PC-3 (cell line): ENCODE measurements at regions of chr11 and their contacts with region 1.

Region 1: DNA sequence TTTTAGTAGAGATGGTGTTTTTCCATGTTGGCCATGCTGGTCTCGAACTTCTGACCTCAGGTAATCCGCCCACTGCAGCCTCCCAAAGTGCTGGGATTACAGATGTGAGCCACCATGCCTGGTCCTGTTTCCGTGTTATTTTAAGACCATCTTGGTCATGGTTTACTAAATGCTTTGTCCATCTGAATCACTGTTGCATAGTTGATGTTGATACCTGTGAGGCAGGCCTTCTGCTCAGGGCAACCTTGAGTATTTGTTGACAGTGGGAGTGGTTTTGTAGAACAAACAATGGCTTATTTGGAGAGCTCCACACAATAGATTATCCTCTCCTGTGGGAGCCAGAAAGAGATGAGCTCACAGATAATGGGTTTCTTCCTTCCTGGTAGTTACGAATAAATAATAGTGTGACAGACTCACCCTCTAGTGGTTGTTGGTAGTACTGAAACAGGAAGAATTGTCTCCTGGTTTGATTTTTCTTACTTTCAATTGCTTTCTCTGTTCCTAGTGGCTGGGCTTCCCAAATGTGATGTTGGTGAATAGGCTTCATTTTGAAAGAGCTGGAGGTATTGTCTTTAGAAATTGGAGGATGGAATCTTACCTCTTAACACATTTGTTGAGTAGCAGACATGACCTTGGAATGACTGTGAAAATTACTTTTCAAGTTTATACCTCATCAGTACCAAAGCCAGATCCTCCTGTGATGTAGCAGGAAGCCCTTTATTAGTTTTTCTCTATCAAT is 39.0 kb downstream of the CTNND1 start:
- DNase-seq: peak; percentile 99
- ATAC-seq: peak; percentile 87
- H3K4me3 ChIP-seq: no peak overlapping the region; the same call in 1 of the 2 replicates
- H3K27ac ChIP-seq: peak overlapping the region; percentile 82
- H3K4me1 ChIP-seq: peaks cover 32% of the 10 kb centered on the region
- H3K27me3 ChIP-seq: no peaks in the 10 kb centered on the region
- CTCF ChIP-seq: peak; percentile 98

Region 2: DNA sequence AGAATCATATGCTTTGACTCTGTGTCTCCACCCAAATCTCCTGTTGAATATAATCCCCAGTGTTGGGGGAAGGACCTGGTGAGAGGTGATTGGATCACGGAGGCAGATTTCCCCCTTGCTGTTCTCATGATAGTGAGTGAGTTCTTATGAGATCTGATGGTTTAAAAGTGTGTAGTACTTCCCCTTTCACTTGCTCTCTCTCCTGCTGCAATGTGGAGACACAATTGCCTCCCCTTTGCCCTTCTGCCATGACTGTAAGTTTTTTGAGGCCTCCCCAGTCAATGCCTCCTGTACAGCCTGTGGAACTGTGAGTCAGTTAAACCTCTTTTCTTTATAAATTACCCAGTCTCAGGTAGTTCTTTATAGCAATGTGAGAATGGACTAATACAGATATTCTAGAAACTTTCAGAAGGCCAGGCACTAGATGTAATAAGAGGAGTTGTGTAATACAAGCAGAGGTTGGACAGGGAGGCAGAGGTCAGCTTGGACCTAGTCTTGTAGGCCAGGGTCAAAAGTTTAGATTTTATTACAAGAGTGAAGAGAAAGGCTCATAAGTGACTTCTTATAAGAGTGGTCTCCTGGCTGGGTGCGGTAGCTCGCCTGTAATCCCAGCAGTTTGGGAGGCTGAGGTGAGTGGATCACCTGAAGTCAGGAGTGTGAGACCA is 212.4 kb before region 1 on chr11:
- CTCF ChIA-PET with region 1: no interaction called
- POLR2A ChIA-PET with region 1: no interaction called
- intact Hi-C with region 1: no loop called
- DNase-seq: no peak
- ATAC-seq: no peak
- H3K4me3 ChIP-seq: no peak overlapping the region
- H3K27ac ChIP-seq: no peak overlapping the region
- H3K4me1 ChIP-seq: no peaks in the 10 kb centered on the region
- H3K27me3 ChIP-seq: peaks cover 10% of the 10 kb centered on the region
- CTCF ChIP-seq: no peak

Region 3: GRCh38 chr11:57667736-57668435 is 132.7 kb before region 1 on chr11 and contains the start of gene ZDHHC5:
- CTCF ChIA-PET with region 1: interaction called, 3 read pairs
- POLR2A ChIA-PET with region 1: no interaction called
- intact Hi-C with region 1: loop called (anchors 2 kb)
- DNase-seq: peak; percentile 99
- ATAC-seq: peak; percentile 87
- H3K4me3 ChIP-seq: peak within 1 kb of the TSS; percentile 97
- H3K27ac ChIP-seq: peak within 1 kb of the TSS; percentile 88
- H3K4me1 ChIP-seq: peaks cover 16% of the 10 kb centered on the region
- H3K27me3 ChIP-seq: no peaks in the 10 kb centered on the region
- CTCF ChIP-seq: peak; percentile 39; the same call in 1 of the 2 replicates
- total RNA-seq, gene ZDHHC5: 86.7 and 102 TPM in 2 replicates

Region 4: GRCh38 chr11:57741132-57742086 is 59.2 kb before region 1 on chr11 and contains the start of gene SELENOH:
- CTCF ChIA-PET with region 1: interaction called, 11 read pairs
- POLR2A ChIA-PET with region 1: interaction called, 3 read pairs
- intact Hi-C with region 1: no loop called
- DNase-seq: peak; percentile 98
- ATAC-seq: peak; percentile 94
- H3K4me3 ChIP-seq: peak within 1 kb of the TSS; percentile 90
- H3K27ac ChIP-seq: peak within 1 kb of the TSS; percentile 46
- H3K4me1 ChIP-seq: peaks cover 11% of the 10 kb centered on the region
- H3K27me3 ChIP-seq: no peaks in the 10 kb centered on the region
- CTCF ChIP-seq: no peak
- total RNA-seq, gene SELENOH: 306 and 353 TPM in 2 replicates

Region 5: DNA sequence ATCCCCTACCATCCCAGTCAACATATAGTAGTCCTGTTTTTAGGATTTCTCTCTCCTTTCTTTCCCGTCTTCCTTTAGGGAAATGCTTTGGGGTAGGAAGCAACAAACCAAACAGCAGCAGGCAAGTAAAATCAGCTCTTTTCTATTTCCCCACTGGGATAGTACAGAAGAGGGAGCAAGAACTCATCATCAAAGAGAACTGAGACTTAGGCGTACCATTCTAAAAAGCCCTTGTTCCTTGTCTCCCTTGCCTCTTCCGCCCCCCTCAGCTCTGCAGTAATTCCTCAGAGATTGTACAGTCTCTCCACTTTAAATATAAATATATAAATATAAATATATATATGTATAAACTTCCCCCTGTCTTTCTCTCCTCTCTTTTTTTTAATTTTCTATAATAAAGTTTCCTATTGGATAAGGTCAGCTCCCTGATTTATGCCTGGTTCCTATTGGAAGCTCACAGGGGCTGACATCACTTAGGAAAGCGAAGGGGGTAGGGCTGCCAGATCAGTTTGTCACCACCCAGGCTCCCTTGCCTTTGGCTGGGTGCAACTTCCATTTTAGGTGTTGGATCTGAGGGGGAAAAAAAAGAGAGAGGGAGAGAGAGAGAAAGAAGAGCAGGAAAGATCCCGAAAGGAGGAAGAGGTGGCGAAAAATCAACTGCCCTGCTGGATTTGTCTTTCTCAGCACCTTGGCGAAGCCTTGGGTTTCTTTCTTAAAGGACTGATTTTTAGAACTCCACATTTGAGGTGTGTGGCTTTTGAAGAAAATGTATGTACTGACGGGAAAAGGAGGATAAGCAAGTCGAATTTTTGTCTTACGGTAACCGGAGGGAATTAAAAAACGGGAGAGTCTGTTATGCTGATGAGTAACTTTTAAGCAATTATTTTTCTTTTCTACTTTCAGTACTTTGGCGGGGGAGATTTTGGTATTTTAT is 39.0 kb before region 1 on chr11 and contains the start of gene CTNND1:
- CTCF ChIA-PET with region 1: interaction called, 56 read pairs
- POLR2A ChIA-PET with region 1: interaction called, 18 read pairs
- intact Hi-C with region 1: loop called (anchors 1 kb)
- DNase-seq: peak; percentile 98
- ATAC-seq: peak; percentile 90
- H3K4me3 ChIP-seq: peak within 1 kb of the TSS; percentile 79
- H3K27ac ChIP-seq: peak within 1 kb of the TSS; percentile 84
- H3K4me1 ChIP-seq: peaks cover 26% of the 10 kb centered on the region
- H3K27me3 ChIP-seq: no peaks in the 10 kb centered on the region
- CTCF ChIP-seq: no peak
- total RNA-seq, gene CTNND1: 117 and 121 TPM in 2 replicates

Region 6: DNA sequence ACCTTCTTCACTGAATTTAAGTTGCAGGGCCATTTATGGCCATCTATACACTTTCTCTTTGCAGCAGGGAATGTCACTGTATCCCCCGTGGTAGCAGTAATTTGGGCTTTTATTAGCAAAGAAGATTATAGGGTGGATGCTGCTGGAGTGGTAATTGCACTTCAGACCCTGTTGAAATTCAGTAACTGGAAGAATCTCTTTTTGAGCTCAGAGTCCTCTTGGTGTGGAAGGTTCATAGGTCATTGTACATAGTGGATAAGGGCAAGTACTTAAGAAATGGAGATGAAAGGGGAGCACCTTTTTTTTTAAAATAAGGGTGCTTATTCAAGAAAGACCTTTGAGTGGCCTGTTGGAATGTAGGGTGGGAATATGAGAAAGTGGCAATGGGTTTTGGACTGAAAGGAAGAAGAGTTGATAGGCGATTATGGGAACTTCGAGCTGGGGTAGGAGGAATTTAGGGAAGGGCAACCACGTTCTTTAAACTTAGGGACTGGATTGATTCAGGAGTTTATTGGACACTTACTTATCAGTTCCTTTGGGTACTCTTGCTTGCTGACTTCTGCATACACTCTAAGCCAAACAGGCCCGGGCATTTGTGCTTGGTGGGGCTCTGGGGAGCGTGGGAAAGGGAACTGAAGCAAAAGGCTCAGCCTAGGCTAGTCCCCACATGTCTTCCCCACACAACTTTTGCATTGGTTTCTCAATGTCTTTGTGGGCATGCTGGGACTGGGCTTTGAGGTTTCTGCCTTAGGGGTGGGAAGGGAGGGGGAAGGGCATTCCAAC is 12.5 kb before region 1 on chr11:
- CTCF ChIA-PET with region 1: interaction called, 3 read pairs
- POLR2A ChIA-PET with region 1: interaction called, 19 read pairs
- intact Hi-C with region 1: no loop called
- DNase-seq: no peak
- ATAC-seq: no peak
- H3K4me3 ChIP-seq: no peak overlapping the region
- H3K27ac ChIP-seq: no peak overlapping the region
- H3K4me1 ChIP-seq: peaks cover 25% of the 10 kb centered on the region
- H3K27me3 ChIP-seq: no peaks in the 10 kb centered on the region
- CTCF ChIP-seq: no peak